AG04450 (cell line): ENCODE measurements at regions of chr3 and their contacts with region 1.

Region 1: DNA sequence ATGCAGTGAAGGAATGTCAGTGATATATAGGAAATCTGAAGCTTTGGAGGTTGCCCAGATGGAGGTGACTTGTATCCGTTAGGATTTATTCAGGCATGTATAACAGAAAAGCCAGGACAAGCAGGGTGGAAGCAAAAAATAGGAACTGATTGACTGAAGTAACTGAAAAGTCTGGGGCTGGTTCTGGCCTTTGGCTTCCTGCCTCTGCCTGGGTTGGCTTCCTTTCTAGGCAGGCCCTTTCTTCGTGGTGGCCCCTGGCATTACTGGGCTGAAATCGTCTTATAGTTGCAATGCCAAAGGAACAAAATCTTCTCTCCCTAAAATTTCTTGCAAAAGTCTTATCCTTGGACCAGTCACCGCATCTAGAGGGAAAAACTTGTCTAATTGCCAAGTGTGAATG is 386.1 kb downstream of the PTPRG start:
- DNase-seq: no peak
- H3K4me3 ChIP-seq: no peak overlapping the region
- H3K27ac ChIP-seq: no peak overlapping the region
- H3K27me3 ChIP-seq: no peaks in the 10 kb centered on the region
- CTCF ChIP-seq: no peak

Region 2: DNA sequence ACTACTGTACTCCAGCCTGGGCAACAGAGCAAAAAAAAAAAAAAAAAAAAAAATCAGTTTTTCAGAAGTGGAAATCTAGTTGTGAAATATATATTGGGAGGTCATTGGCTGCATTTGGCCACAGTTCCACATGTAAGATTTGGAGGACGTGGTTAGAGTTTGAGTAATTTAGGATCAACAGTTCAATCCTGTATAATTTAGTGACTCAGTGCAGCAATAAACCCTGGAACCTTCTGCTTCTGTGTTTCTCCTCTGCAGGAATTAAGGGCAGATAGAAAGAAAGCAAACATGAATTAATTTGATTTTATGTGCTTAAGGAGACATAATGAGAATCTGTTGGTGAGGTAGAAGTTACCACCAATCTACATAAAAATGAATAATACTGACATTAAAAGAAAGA is 39.1 kb before region 1 on chr3:
- CTCF ChIA-PET with region 1: no interaction called
- POLR2A ChIA-PET with region 1: no interaction called
- DNase-seq: peak; percentile 10
- H3K4me3 ChIP-seq: no peak overlapping the region
- H3K27ac ChIP-seq: no peak overlapping the region
- H3K27me3 ChIP-seq: no peaks in the 10 kb centered on the region
- CTCF ChIP-seq: no peak

Region 3: GRCh38 chr3:61936344-61936937 is 11.0 kb before region 1 on chr3:
- CTCF ChIA-PET with region 1: interaction called, 13 read pairs
- POLR2A ChIA-PET with region 1: no interaction called
- DNase-seq: no peak
- H3K4me3 ChIP-seq: no peak overlapping the region
- H3K27ac ChIP-seq: no peak overlapping the region
- H3K27me3 ChIP-seq: no peaks in the 10 kb centered on the region
- CTCF ChIP-seq: peak; percentile 65